Activated CD4-positive, alpha-beta T cell treated with anti-CD3 and anti-CD28 coated beads, Interleukin-2, amount 10 ng/mL, durations not matched to agents 7 days and 5 days (primary cell): ENCODE measurements at regions of chr11 and their contacts with region 1.

Region 1: GRCh38 chr11:57493507-57494503 is 21.7 kb downstream of the SLC43A1 start:
- DNase-seq: peak; percentile 78
- H3K4me3 Mint-ChIP-seq: no peak overlapping the region
- H3K27ac Mint-ChIP-seq: peak overlapping the region; percentile 79
- H3K4me1 Mint-ChIP-seq: peaks cover 10% of the 10 kb centered on the region
- H3K27me3 Mint-ChIP-seq: no peaks in the 10 kb centered on the region

Region 2: DNA sequence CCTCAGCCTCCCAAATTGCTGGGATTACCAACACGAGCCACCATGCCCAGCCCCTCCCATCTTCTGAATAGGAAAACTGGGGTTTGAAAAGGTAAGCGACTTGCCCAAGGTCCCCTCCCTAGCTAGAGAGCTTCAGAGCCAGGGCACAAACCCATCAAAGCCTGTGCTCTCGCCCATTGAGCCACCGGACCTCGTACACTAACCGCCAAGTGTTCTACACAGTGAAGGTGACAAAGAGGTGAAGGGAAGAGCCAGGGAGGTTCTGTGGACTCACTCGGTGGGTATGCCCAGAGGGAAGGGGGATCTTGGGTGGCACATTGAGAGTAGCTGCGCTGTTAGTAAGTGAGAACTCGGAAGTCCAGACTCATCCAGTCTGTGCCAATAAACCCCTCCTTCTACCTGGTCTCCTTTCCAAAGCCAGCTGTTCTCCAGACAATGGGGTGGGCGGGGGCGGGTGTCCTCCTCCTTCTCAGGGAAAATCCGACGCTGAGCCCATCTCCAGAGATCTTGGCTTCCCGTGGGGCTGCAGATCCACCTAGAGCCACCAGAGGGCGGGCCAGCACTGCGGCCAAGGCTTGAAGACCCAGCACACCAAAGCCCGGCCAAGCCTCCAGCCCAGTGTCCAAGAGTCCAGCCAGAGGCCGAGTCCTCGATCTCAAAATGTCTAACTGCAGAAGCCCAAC is 36.7 kb before region 1 on chr11:
- CTCF ChIA-PET with region 1: interaction called, 15 read pairs
- POLR2A ChIA-PET with region 1: no interaction called
- DNase-seq: peak; percentile 74
- H3K4me3 Mint-ChIP-seq: no peak overlapping the region
- H3K27ac Mint-ChIP-seq: peak overlapping the region; percentile 44
- H3K4me1 Mint-ChIP-seq: peaks cover 27% of the 10 kb centered on the region
- H3K27me3 Mint-ChIP-seq: peaks cover 53% of the 10 kb centered on the region

Region 3: GRCh38 chr11:57476757-57477506 is 16.9 kb before region 1 on chr11:
- CTCF ChIA-PET with region 1: interaction called, 19 read pairs
- POLR2A ChIA-PET with region 1: no interaction called
- DNase-seq: no peak
- H3K4me3 Mint-ChIP-seq: no peak overlapping the region
- H3K27ac Mint-ChIP-seq: no peak overlapping the region
- H3K4me1 Mint-ChIP-seq: peaks cover 44% of the 10 kb centered on the region
- H3K27me3 Mint-ChIP-seq: peaks cover 39% of the 10 kb centered on the region

Region 4: DNA sequence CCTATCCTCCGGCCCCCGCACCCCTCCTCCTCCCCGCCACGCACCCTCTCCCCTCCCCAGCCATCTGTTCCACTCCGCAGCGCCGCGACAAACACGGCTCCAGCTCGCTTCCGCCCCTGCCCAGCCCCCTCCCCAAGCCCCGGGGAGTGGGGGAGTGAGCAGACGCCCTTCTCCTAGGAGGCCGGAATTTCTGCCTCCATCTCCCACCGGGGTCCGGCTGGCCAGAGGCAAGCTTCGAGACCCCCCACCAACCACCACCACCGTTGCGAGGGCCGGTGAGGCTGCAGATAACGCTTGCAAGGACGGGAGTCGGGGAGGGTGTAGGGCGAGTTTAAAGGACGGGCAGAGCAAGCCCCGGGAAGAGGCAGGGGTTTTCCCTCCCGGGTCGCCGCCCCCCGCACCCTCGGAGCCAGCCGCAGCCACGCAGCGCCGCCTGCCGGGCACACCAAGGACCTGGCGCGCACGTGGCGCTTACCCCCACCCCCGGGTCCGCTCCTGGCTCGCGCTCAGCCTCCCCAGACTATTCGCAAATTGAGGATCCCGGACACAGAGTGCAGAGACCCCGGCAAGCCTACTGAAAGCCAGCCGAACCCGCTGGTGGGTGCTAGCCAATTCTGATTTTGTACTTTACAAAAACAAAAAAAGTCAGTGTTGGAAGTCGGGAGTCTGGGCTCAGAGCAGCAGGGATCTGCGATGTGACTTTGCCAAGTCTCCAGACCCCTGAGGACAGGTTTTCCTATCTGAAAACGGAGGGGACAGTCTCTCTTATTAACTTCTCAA is 10.8 kb before region 1 on chr11:
- CTCF ChIA-PET with region 1: interaction called, 19 read pairs
- POLR2A ChIA-PET with region 1: interaction called, 3 read pairs
- DNase-seq: peak; percentile 48
- H3K4me3 Mint-ChIP-seq: no peak overlapping the region
- H3K27ac Mint-ChIP-seq: no peak overlapping the region
- H3K4me1 Mint-ChIP-seq: peaks cover 10% of the 10 kb centered on the region
- H3K27me3 Mint-ChIP-seq: peaks cover 24% of the 10 kb centered on the region

Region 5: DNA sequence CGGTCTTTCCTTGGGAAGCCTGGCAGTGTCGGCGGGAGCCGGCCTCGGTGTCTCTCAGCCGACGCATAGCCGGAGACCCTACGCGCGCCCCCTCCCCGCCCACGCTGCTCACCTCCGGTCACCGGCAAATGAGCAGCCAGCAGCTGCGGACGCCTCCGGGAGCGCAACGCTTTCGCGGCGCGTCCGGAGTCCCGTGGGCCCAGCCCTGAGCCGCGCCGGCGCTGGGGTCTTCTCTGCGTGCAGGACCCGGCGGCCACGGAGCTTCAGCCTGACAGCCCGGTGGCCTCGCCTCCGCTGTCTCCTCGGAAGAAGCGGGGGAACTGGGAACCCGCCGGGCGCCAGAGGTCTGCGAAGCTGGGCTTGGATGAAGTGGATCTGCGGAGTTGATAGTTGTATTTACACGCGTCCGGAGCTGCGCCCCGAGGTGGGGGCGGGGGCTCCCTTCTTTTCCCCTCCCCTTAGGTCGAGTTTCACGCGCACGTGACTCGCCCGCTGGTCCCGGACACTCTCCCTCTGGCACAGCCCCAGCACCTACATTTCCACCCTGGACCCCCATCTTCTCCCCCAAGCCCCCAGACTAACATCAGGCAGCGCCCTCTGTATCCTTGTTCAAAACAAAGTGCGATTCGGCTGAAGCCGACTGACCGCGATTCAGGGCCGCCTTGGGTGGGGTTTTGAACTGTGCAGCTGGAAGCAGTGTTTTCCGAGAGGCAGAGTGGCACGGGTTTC is 21.7 kb after region 1 on chr11 and contains the start of gene SLC43A1:
- CTCF ChIA-PET with region 1: interaction called, 39 read pairs
- POLR2A ChIA-PET with region 1: no interaction called
- DNase-seq: peak; percentile 36
- H3K4me3 Mint-ChIP-seq: peak within 1 kb of the TSS; percentile 99
- H3K27ac Mint-ChIP-seq: peak within 1 kb of the TSS; percentile 94
- H3K4me1 Mint-ChIP-seq: peaks cover 31% of the 10 kb centered on the region
- H3K27me3 Mint-ChIP-seq: no peaks in the 10 kb centered on the region
- total RNA-seq, gene SLC43A1: 22.9 to 23.4 TPM

Region 6: GRCh38 chr11:57527056-57527631 is 33.3 kb after region 1 on chr11:
- CTCF ChIA-PET with region 1: interaction called, 50 read pairs
- POLR2A ChIA-PET with region 1: interaction called, 3 read pairs
- DNase-seq: peak; percentile 81
- H3K4me3 Mint-ChIP-seq: no peak overlapping the region
- H3K27ac Mint-ChIP-seq: peak overlapping the region; percentile 39
- H3K4me1 Mint-ChIP-seq: peaks cover 43% of the 10 kb centered on the region
- H3K27me3 Mint-ChIP-seq: no peaks in the 10 kb centered on the region

Region 7: GRCh38 chr11:57698843-57699365 is 205.1 kb after region 1 on chr11:
- CTCF ChIA-PET with region 1: no interaction called
- POLR2A ChIA-PET with region 1: no interaction called
- DNase-seq: no peak
- H3K4me3 Mint-ChIP-seq: no peak overlapping the region
- H3K27ac Mint-ChIP-seq: no peak overlapping the region
- H3K4me1 Mint-ChIP-seq: no peaks in the 10 kb centered on the region
- H3K27me3 Mint-ChIP-seq: no peaks in the 10 kb centered on the region